ENCODE measurements at regions of chr17 and their contacts with region 1.

Region 1: GRCh38 chr17:72539981-72540897 is 419.4 kb downstream of the SOX9 start:
- DNase-seq: peak; percentile 67
- H3K4me3 ChIP-seq: peak overlapping the region in 2 of 3 experiments; percentile 10 to 20
- H3K27ac ChIP-seq: peak overlapping the region; percentile 43
- H3K4me1 ChIP-seq: peaks cover 16% of the 10 kb centered on the region
- H3K27me3 ChIP-seq: no peaks in the 10 kb centered on the region
- CTCF ChIP-seq: peak; percentile 60 to 83

Region 2: GRCh38 chr17:70767102-70767701 is 1773.0 kb before region 1 on chr17:
- CTCF ChIA-PET with region 1: no interaction called
- dilution Hi-C with region 1: no loop called
- in situ Hi-C with region 1: no loop called
- intact Hi-C with region 1: loop called (anchors 10 kb)
- DNase-seq: peak; percentile 9
- H3K4me3 ChIP-seq: no peak overlapping the region
- H3K27ac ChIP-seq: no peak overlapping the region
- H3K4me1 ChIP-seq: no peaks in the 10 kb centered on the region
- H3K27me3 ChIP-seq: no peaks in the 10 kb centered on the region
- CTCF ChIP-seq: peak; percentile 67 to 71

Region 3: GRCh38 chr17:71118039-71118438 is 1422.2 kb before region 1 on chr17:
- CTCF ChIA-PET with region 1: no interaction called
- dilution Hi-C with region 1: no loop called
- in situ Hi-C with region 1: loop called (anchors 25 kb)
- intact Hi-C with region 1: loop called (anchors 1 kb)
- DNase-seq: peak; percentile 62
- H3K4me3 ChIP-seq: no peak overlapping the region
- H3K27ac ChIP-seq: peak overlapping the region; percentile 15
- H3K4me1 ChIP-seq: peaks cover 11% of the 10 kb centered on the region
- H3K27me3 ChIP-seq: no peaks in the 10 kb centered on the region
- CTCF ChIP-seq: peak; percentile 68 to 73

Region 4: DNA sequence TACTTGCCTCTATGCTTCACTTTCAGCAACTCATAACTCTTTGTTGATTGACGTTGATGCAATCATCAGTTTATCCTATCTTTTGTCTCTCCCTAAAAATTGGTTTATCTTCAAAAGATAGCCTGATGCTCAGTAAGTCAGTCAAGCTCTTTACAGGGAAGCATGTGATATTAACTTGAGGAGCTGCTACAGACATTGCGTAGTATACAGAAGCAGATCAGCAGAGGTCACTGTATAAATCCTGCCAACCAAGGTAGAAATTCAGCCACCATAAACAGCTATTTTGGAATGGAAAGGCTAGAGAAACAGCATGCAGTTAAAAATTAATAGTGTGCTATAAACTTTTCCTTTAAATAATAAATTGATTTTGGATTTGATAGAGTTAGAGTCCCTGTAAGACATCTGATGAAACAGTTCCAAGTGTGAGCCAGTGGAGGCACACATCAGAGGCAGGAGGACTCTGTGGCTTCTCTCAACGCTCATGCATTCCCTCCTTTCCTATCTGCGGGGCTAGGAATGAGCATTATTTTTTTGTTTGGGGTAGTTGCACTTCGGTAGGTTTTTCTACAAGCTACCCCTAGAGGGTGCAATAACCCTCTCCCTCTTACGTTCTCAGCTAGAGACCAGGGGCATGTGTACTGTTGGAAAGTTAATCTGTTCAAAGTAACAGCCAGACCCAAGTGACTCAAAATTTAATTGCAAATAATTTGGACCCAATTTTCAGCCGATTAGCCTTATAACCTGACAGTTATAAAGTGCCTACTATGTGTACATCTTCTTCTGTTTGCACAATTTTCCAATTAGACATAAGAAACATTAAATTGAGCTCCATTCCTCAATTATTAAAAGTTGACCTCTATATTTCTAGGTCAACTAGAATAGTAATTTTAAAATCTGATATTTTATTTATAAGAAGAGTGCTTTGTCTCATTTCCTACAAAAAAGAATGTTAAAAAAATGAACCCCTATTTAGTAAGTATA is 1067.1 kb before region 1 on chr17:
- CTCF ChIA-PET with region 1: no interaction called
- dilution Hi-C with region 1: no loop called
- in situ Hi-C with region 1: loop called in 1 of 2 experiments (anchors 25 kb)
- intact Hi-C with region 1: loop called (anchors 1 kb)
- DNase-seq: peak; percentile 63
- H3K4me3 ChIP-seq: no peak overlapping the region
- H3K27ac ChIP-seq: no peak overlapping the region
- H3K4me1 ChIP-seq: peaks cover 12% of the 10 kb centered on the region
- H3K27me3 ChIP-seq: no peaks in the 10 kb centered on the region
- CTCF ChIP-seq: peak; percentile 67 to 81

Region 5: GRCh38 chr17:72126563-72127486 is 413.4 kb before region 1 on chr17:
- CTCF ChIA-PET with region 1: no interaction called
- dilution Hi-C with region 1: loop called (anchors 25 kb)
- in situ Hi-C with region 1: loop called (anchors 10 kb)
- intact Hi-C with region 1: no loop called
- DNase-seq: peak; percentile 88
- H3K4me3 ChIP-seq: no peak overlapping the region
- H3K27ac ChIP-seq: peak overlapping the region; percentile 36
- H3K4me1 ChIP-seq: peaks cover 33% of the 10 kb centered on the region
- H3K27me3 ChIP-seq: no peaks in the 10 kb centered on the region
- CTCF ChIP-seq: no peak

Region 6: GRCh38 chr17:72345536-72345935 is 194.7 kb before region 1 on chr17:
- CTCF ChIA-PET with region 1: no interaction called
- dilution Hi-C with region 1: no loop called
- in situ Hi-C with region 1: loop called in 1 of 2 experiments (anchors 10 kb)
- intact Hi-C with region 1: loop called (anchors 1 kb)
- DNase-seq: no peak
- H3K4me3 ChIP-seq: no peak overlapping the region
- H3K27ac ChIP-seq: no peak overlapping the region
- H3K4me1 ChIP-seq: peaks cover 17% of the 10 kb centered on the region
- H3K27me3 ChIP-seq: no peaks in the 10 kb centered on the region
- CTCF ChIP-seq: no peak

Region 7: DNA sequence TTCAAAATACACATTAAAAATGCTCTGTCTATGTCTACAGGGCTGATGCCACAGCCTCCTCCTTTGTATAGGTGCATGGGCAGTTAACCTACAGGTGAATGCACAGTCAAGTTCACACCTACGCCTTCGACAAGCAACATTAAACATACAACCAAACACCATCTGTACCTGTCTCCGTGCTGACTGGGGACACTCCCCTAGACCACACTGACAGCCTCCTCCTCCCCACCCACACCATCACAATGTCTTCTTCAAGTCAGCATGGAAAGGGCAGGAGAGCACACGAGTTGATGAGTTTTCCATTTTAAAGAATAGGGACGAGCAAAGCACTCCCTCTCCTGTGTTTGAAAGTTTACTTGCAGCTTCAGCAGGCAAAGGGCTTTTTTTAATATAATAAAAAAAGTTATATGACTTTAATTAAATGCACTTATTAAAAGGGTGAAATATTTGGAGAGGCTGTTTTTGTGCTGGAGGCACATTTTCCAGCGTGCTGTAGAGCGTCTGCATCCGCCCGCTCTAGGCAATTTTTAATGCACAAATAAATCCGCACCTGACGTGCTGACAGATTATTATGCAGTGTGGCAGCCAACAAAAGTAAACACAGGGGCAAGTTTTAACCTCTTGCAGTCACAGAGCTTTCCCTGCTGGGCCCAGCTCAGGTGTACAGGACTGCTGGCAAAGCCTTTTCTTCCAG is 51.5 kb before region 1 on chr17:
- CTCF ChIA-PET with region 1: no interaction called
- dilution Hi-C with region 1: no loop called
- in situ Hi-C with region 1: no loop called
- intact Hi-C with region 1: no loop called
- DNase-seq: no peak
- H3K4me3 ChIP-seq: no peak overlapping the region
- H3K27ac ChIP-seq: no peak overlapping the region
- H3K4me1 ChIP-seq: no peaks in the 10 kb centered on the region
- H3K27me3 ChIP-seq: no peaks in the 10 kb centered on the region
- CTCF ChIP-seq: no peak